ENCODE measurements at regions of chr15 and their contacts with region 1.

Region 1: GRCh38 chr15:96893159-96893906 is 562.8 kb downstream of the NR2F2 start:
- DNase-seq: no peak
- ATAC-seq: no peak

Region 2: GRCh38 chr15:96356494-96357455 is 536.6 kb before region 1 on chr15:
- intact Hi-C with region 1: loop called in 1 of 2 experiments (anchors 10 kb)
- DNase-seq: peak; percentile 54 to 84
- ATAC-seq: peak; percentile 81